GM10248 (cell line): ENCODE measurements at regions of chr1 and their contacts with region 1.

Region 1: DNA sequence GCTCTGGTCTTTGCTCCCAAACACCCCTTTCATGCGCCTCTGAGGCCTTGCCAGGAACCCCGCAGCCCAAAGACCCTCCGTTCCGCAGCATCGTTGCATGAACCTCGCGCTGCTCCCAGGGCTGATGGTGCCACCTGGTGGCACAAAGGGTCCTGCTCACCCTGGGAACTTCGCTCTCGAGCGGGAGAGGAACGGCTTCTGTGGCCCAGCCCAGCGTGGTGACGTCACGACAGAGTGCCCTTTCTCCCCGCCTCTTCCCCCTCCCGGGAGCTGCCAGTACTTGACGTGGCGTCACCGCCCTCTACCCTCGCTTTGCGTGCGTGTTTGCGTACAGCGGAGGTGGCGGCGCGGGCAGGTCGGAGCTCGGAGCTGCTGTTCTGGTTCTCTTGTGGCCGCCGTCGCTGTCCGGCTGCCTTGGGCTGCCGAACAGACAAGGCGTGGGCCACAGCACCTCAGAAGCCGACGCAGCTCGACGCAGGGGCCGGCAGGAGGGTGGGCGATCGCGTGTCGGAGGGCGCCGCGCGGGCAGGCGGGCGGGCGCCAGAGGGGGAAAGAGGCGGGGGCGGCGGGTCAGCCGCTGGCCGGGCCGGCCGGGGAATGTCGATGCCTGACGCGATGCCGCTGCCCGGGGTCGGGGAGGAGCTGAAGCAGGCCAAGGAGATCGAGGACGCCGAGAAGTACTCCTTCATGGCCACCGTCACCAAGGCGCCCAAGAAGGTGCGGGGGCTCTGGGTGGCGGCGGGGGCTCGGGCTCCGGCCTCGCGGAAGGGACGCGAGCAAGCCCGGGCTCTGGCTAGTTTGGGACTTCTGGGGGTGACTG is at the start of gene AHCYL1:
- DNase-seq: peak; percentile 100
- CTCF ChIP-seq: peak; percentile 96

Region 2: DNA sequence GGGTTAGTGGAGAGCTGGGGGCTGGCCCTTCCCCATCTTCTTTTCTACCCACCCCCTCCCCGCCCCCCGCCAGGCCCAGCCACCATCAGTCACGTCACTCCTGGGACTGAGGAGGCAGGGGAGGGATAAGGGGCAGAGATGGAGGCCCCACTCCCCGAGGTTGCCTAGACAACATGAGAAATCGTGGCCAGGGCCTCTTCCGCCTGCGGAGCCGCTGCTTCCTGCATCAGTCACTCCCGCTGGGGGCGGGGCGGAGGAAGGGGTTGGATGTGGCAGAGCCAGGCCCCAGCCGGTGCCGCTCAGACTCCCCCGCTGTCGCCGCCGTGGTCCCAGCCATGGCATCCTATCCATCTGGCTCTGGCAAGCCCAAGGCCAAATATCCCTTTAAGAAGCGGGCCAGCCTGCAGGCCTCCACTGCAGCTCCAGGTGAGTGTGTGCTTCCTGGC is 363.8 kb before region 1 on chr1:
- CTCF ChIA-PET with region 1: interaction called, 13 read pairs
- POLR2A ChIA-PET with region 1: no interaction called
- DNase-seq: peak; percentile 95
- CTCF ChIP-seq: no peak

Region 3: GRCh38 chr1:109643385-109644230 is 341.1 kb before region 1 on chr1:
- CTCF ChIA-PET with region 1: interaction called, 138 read pairs
- POLR2A ChIA-PET with region 1: interaction called, 5 read pairs
- DNase-seq: peak; percentile 88
- CTCF ChIP-seq: peak; percentile 92

Region 4: DNA sequence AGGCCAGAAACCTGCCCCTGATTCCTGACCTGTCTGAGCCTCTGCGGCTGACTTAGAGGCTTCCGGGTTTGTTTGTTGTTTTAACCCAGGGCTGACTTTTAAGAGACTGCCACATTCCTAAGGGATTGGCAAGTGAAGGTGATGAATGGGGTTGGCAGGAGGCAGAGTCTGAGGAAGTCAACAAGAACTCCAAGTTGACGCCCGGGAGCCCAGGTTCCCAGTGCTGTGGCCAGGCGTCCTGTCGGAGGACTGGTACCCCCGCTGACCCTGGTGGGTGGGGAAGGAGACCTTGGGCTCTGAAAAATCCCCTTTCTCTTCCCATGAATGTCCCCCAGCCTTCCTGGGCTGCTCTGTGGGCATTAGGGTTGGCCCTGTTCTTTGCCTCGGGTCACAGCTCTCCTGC is 201.2 kb before region 1 on chr1:
- CTCF ChIA-PET with region 1: interaction called, 737 read pairs
- POLR2A ChIA-PET with region 1: no interaction called
- DNase-seq: no peak
- CTCF ChIP-seq: no peak

Region 5: GRCh38 chr1:109895720-109896504 is 88.8 kb before region 1 on chr1:
- CTCF ChIA-PET with region 1: interaction called, 18 read pairs
- POLR2A ChIA-PET with region 1: no interaction called
- DNase-seq: no peak
- CTCF ChIP-seq: no peak

Region 6: GRCh38 chr1:109950493-109950892 is 34.2 kb before region 1 on chr1:
- CTCF ChIA-PET with region 1: interaction called, 10 read pairs
- POLR2A ChIA-PET with region 1: no interaction called
- DNase-seq: no peak
- CTCF ChIP-seq: no peak

Region 7: DNA sequence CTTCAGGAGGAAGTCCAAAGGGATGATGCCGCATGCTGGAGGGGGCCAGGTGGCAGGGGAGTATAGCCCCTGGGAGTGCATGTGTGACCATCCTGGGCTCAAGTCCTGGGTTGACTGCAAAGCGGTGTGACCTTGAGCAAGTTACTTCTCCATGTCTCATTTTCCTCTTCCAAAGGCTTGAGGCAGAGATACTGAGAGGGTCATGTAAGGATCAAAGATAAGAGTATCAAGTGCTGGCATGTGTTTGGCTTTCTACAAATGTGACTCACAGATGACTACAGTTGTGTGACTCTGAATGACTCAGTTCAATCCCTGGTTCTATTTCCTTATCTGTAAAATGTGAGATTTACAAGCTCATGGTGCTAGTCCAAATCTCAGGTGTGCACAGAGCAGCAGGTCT is 492.4 kb after region 1 on chr1:
- CTCF ChIA-PET with region 1: no interaction called
- POLR2A ChIA-PET with region 1: no interaction called
- DNase-seq: no peak
- CTCF ChIP-seq: no peak